IMR-90 (cell line): ENCODE measurements at regions of chr3 and their contacts with region 1.

Region 1: DNA sequence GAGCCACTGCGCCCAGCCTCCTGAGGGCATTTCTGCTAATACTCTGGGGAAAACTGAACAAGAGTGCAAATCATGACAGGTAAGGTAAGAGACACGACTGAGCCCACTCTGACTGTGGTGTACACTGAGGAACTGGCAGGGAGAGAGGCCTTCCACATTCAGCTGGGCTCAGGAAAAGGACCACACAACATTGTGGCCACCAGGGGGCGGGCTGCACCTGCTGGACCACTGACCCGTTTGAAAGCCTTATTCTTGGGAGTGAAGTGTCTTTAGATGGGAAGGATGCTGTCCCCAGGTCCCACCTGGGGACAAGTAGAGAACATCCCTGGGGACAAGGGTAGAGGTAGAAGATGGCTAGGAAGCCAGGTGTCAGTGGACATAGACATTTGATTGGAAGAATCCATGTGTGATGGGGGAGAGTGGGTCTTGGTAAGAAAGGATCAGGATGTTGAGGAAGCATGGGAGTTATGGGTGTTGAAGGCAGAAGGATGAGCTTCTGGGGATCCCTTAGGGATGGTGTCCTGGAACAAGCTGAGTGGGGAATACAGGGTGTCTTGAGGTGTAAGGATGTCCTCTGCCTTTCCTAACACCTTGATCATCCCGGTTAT is 6.2 kb upstream of the CTDSPL start:
- DNase-seq: peak; percentile 63
- ATAC-seq: peak; percentile 59
- H3K4me3 ChIP-seq: no peak overlapping the region
- H3K27ac ChIP-seq: no peak overlapping the region
- H3K4me1 ChIP-seq: peaks cover 9% of the 10 kb centered on the region
- H3K27me3 ChIP-seq: no peaks in the 10 kb centered on the region
- CTCF ChIP-seq: peak; percentile 90
- POLR2A ChIP-seq: no peak
- RAD21 ChIP-seq: peak; percentile 97

Region 2: DNA sequence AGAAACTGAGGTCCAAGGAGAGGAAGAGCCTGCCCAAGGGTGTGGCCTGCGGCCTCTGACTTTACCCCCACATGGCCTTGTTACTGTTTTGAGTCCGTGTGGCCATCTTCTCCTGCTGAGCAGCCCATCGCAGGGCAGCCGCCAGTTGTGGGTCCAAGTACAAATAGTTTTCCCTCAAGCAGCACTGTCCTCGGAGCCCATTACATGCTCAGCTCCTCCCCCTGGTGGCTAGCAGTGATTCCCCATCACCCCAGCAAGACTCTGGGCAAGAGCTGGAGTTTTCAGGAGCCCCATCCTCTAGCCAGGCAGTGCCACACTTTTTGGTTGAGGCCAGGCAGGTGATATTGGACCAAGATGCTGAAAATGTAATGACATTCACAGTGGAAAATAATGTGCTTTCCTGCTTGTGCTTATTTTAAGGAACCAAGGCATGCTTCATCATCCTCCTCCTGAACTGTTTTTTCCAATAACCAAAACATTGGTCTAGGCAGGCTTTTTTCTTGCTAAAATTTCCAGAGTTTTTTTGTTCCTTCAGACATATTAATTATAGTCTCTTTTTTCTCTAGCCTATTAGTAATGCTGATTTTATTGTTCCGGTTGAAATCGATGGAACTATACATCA is 111.9 kb after region 1 on chr3:
- CTCF ChIA-PET with region 1: interaction called, 31 read pairs
- POLR2A ChIA-PET with region 1: no interaction called
- dilution Hi-C with region 1: no loop called
- in situ Hi-C with region 1: loop called (anchors 5 kb)
- intact Hi-C with region 1: loop called (anchors 1 kb)
- DNase-seq: peak; percentile 65
- ATAC-seq: peak; percentile 97
- H3K4me3 ChIP-seq: no peak overlapping the region
- H3K27ac ChIP-seq: no peak overlapping the region
- H3K4me1 ChIP-seq: peaks cover 4% of the 10 kb centered on the region; the same call in 1 of the 2 replicates
- H3K27me3 ChIP-seq: no peaks in the 10 kb centered on the region
- CTCF ChIP-seq: peak; percentile 85
- POLR2A ChIP-seq: no peak
- RAD21 ChIP-seq: peak; percentile 90

Region 3: DNA sequence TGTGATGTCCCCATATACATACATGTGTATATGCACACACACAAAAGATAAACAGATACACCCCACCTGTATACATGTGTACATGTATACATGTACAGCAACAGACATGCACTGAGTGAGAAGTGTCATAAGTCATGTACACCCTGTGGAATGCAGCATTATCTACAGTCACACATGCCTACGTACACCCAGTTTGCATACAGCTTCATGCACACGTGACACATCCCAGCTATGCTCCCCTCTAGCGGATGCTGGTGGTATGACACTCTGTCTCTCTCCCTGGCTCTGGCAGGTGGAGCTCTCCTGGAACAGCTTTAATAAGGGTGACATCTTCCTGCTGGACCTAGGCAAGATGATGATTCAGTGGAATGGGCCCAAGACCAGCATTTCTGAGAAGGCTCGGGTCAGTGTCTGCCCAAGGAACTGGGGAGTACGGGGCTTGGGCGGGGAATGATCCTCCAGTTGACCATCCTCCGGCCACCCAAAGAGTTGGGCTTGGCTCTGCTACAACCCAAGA is 141.4 kb after region 1 on chr3:
- CTCF ChIA-PET with region 1: interaction called, 16 read pairs
- POLR2A ChIA-PET with region 1: no interaction called
- dilution Hi-C with region 1: no loop called
- in situ Hi-C with region 1: no loop called
- intact Hi-C with region 1: loop called (anchors 1 kb)
- DNase-seq: peak; percentile 76
- ATAC-seq: peak; percentile 50
- H3K4me3 ChIP-seq: no peak overlapping the region
- H3K27ac ChIP-seq: no peak overlapping the region
- H3K4me1 ChIP-seq: peaks cover 12% of the 10 kb centered on the region
- H3K27me3 ChIP-seq: no peaks in the 10 kb centered on the region; the same call in 1 of the 2 replicates
- CTCF ChIP-seq: peak; percentile 78
- POLR2A ChIP-seq: no peak
- RAD21 ChIP-seq: peak; percentile 50

Region 4: GRCh38 chr3:38004415-38005076 is 149.1 kb after region 1 on chr3:
- CTCF ChIA-PET with region 1: interaction called, 4 read pairs
- POLR2A ChIA-PET with region 1: no interaction called
- dilution Hi-C with region 1: no loop called
- in situ Hi-C with region 1: no loop called
- intact Hi-C with region 1: loop called (anchors 1 kb)
- DNase-seq: peak; percentile 59
- ATAC-seq: peak; percentile 88
- H3K4me3 ChIP-seq: no peak overlapping the region
- H3K27ac ChIP-seq: no peak overlapping the region
- H3K4me1 ChIP-seq: no peaks in the 10 kb centered on the region
- H3K27me3 ChIP-seq: no peaks in the 10 kb centered on the region
- CTCF ChIP-seq: peak; percentile 67
- POLR2A ChIP-seq: no peak
- RAD21 ChIP-seq: peak; percentile 57